ENCODE measurements at regions of chr10 and their contacts with region 1.

Region 1: DNA sequence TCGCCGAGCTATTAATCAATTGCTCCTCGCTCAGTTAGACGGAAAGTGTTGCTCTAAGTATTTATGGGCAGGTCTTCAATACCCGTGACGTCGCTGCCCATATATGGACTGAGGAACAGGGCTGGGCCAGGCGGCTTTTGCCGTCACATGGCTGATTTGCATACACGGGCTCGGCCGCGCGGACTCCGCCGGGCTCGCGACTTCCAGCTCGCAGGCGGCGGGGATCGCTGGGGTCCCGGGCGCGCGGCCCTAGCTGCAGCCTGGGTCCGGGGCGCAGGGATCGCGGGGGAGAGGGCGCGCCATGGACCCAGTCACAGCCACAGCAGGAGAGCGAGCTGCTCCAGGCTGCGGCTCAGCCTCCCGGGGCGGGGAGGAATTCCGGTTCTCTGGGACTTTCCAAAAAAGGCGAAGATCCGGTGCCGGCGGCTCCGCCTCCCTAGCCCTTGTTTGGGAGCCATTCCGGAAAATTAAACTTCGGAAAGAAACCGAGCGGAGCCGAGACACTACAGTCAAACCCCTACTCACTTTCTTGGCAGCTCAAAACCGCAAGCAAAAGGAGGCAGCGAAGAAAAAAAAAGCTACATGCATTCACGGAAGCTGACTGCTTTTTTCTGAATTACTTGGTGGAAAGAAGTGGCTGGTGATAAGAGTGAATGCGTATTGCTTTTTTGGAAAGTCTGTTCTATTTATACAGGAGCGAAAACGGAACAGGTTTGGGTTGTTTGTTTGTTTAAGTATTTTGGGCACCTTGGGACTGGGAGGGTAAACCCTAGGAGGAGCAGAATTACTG is at the start of gene EGR2:
- DNase-seq: peak; percentile 90 to 93
- H3K4me3 ChIP-seq: peak within 1 kb of the TSS; percentile 94
- H3K27ac ChIP-seq: peak within 1 kb of the TSS; percentile 28
- H3K4me1 ChIP-seq: peaks cover 4% of the 10 kb centered on the region; the same call in 1 of the 2 replicates
- H3K27me3 ChIP-seq: no peaks in the 10 kb centered on the region
- CTCF ChIP-seq: no peak
- total RNA-seq, gene EGR2: 0.24 and 0.53 TPM in 2 replicates

Region 2: GRCh38 chr10:62268399-62269114 is 548.0 kb before region 1 on chr10 and contains the start of gene RTKN2:
- CTCF ChIA-PET with region 1: interaction called, 3 read pairs
- POLR2A ChIA-PET with region 1: interaction called, 7 read pairs
- intact Hi-C with region 1: loop called (anchors 5 kb)
- DNase-seq: peak; percentile 90 to 96
- H3K4me3 ChIP-seq: peak within 1 kb of the TSS; percentile 95
- H3K27ac ChIP-seq: peak within 1 kb of the TSS; percentile 54
- H3K4me1 ChIP-seq: peaks cover 33% of the 10 kb centered on the region
- H3K27me3 ChIP-seq: no peaks in the 10 kb centered on the region
- CTCF ChIP-seq: no peak
- total RNA-seq, gene RTKN2: 16.1 and 18.5 TPM in 2 replicates

Region 3: DNA sequence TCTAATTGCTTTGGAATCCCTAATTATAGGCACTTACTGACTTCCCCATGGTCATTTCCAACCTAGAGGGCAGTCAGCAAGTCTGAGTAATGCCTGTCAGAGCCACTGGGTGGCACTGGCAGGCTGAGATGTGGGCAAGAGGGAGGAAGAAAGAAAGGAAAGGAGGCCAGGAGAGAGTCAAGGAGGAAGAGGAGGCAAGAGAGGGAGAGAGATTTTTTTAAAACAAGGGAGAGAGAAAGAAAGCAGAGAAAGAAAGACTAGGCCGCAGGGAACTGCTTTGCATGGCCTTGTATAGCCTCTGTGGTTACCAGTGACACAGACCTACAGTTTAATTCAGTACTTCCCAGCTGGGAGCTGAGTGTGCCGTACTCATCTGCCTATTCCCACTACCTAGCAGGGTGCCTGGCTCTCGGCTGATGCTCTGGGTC is 222.4 kb before region 1 on chr10:
- CTCF ChIA-PET with region 1: no interaction called
- POLR2A ChIA-PET with region 1: no interaction called
- intact Hi-C with region 1: loop called (anchors 10 kb)
- DNase-seq: peak in 1 of 2 experiments; percentile 45
- H3K4me3 ChIP-seq: no peak overlapping the region
- H3K27ac ChIP-seq: no peak overlapping the region
- H3K4me1 ChIP-seq: no peaks in the 10 kb centered on the region
- H3K27me3 ChIP-seq: no peaks in the 10 kb centered on the region
- CTCF ChIP-seq: peak; percentile 97

Region 4: DNA sequence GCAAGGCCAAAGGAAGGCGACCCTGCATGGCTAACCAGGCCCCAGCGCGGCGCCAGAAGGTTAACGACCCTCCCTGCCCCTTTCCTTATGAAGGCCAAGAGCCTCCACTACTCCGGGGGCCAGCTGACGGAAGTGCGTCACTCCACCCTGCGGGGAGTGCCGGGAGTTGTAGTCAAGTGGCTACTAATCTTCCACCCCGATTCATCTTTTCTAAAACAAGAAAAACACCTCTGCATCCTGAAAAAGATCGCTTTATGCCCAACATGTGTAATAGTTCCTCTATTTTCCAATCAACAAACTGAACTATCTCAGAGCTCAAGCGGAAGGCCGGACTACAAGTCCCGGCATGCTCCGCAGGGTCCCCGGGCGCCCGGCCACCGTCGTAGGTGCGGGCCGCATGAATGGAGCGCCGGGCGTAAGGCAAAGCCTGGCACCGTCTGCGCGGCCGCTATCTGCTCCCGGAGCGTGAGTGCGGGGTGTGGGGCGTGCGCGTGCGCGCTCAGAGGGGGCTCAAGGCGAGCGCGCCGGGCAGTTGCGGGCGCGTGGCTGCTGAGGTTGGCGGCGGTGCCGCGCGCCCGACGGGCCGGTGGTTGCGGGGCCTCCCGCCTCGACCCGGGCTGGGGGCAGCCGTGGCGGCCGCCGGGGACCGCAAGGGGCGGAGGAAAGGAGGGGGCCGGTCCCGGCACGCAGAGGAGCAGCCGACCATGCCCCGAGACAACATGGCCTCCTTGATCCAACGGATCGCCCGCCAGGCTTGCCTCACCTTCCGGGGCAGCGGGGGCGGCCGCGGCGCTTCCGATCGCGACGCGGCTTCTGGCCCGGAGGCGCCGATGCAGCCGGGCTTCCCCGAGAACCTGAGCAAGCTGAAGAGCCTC is 11.9 kb before region 1 on chr10 and contains the start of gene ADO:
- CTCF ChIA-PET with region 1: interaction called, 5 read pairs
- POLR2A ChIA-PET with region 1: no interaction called
- intact Hi-C with region 1: loop called (anchors 1 kb)
- DNase-seq: peak; percentile 55 to 79
- H3K4me3 ChIP-seq: peak within 1 kb of the TSS; percentile 60
- H3K27ac ChIP-seq: peak within 1 kb of the TSS; percentile 69
- H3K4me1 ChIP-seq: peaks cover 25% of the 10 kb centered on the region
- H3K27me3 ChIP-seq: no peaks in the 10 kb centered on the region
- CTCF ChIP-seq: no peak
- total RNA-seq, gene ADO: 13.6 and 13.7 TPM in 2 replicates

Region 5: GRCh38 chr10:63133056-63133820 is 316.7 kb after region 1 on chr10 and contains the start of gene NRBF2:
- CTCF ChIA-PET with region 1: no interaction called
- POLR2A ChIA-PET with region 1: no interaction called
- intact Hi-C with region 1: loop called (anchors 2 kb)
- DNase-seq: peak; percentile 95 to 98
- H3K4me3 ChIP-seq: peak within 1 kb of the TSS; percentile 87
- H3K27ac ChIP-seq: peak within 1 kb of the TSS; percentile 75
- H3K4me1 ChIP-seq: peaks cover 15% of the 10 kb centered on the region; the same call in 1 of the 2 replicates
- H3K27me3 ChIP-seq: no peaks in the 10 kb centered on the region
- CTCF ChIP-seq: no peak; the same call in 1 of the 2 replicates
- total RNA-seq, gene NRBF2: 14.7 and 22.1 TPM in 2 replicates